BJ (cell line): ENCODE measurements at regions of chr22 and their contacts with region 1.

Region 1: DNA sequence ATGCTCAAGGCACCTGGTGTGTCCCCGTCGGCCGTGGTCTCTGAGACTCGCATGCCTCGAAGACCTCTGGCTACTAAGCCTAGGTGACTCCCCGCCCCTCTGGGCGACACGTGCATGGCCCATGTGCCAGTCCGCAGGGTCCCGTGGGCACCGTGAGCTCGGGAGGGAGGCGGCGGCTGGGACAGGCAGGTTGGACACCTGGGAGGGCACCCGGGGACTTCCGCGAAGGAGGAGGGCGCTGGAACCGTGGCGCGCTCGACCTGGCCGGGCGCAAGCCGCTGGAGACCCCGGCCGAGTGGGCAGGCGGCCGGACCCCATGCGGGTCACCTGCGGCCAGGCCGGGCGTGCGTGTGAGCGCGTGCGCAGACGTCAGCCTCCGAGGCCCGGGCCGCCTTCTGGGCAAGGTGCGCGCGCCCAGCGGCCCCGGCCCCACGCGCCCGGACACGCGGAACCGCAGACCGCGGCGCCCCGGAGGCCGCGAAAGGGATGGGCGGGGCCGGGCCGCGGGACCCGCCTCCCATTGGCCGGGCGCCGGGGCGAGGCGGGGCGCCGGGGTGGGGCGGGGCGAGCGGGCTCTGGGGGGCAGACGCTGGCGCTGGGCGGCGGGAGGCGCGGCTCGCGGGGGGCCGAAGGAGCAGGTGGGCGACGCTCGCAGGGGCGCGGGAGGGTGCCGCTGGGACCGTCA is 579 bp upstream of the RASD2 start:
- DNase-seq: no peak
- H3K4me3 ChIP-seq: peak overlapping the region; percentile 58
- H3K27me3 ChIP-seq: peaks cover 15% of the 10 kb centered on the region
- CTCF ChIP-seq: no peak

Region 2: GRCh38 chr22:35479985-35480550 is 60.0 kb before region 1 on chr22:
- CTCF ChIA-PET with region 1: no interaction called
- POLR2A ChIA-PET with region 1: no interaction called
- DNase-seq: no peak
- H3K4me3 ChIP-seq: no peak overlapping the region
- H3K27me3 ChIP-seq: no peaks in the 10 kb centered on the region
- CTCF ChIP-seq: no peak

Region 3: DNA sequence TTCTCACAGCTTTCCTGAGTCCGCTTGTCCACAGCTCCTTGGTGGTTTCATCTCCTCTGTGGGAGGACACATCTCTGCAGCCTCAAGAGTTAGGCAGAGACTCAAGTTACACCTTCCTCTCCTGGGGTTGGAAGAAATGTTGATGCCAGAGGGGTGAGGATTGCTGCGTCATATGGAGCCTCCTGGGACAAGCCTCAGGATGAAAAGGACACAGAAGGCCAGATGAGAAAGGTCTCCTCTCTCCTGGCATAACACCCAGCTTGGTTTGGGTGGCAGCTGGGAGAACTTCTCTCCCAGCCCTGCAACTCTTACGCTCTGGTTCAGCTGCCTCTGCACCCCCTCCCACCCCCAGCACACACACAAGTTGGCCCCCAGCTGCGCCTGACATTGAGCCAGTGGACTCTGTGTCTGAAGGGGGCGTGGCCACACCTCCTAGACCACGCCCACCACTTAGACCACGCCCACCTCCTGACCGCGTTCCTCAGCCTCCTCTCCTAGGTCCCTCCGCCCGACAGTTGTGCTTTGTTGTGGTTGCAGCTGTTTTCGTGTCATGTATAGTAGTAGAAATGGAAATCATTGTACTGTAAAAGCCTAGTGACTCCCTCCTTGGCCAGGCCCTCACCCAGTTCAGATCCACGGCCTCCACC is 12.3 kb after region 1 on chr22:
- CTCF ChIA-PET with region 1: interaction called, 13 read pairs
- POLR2A ChIA-PET with region 1: no interaction called
- DNase-seq: no peak
- H3K4me3 ChIP-seq: no peak overlapping the region
- H3K27me3 ChIP-seq: peaks cover 2% of the 10 kb centered on the region; the same call in 1 of the 2 replicates
- CTCF ChIP-seq: no peak